Caco-2 (cell line): ENCODE measurements at regions of chr3 and their contacts with region 1.

Region 1: DNA sequence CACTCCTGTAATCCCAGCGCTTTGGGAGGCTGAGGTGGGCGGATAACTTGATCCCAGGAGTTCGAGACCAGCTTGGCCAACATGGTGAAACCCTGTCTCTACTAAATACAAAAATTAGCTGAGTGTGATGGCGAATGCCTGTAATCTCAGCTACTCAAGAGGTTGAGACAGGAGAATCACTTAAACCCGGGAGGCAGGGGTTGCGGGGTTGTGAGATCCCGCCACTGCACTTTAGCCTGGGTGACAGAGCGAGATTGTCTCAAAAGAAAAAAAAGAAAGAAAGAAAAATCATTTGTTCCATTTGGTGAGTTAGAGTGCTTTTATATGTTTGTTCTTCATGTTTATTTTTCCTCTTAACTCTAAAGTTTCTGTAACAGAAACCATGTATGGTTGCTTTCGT is 7.3 kb downstream of the NCK1 start:
- DNase-seq: no peak
- H3K4me3 ChIP-seq: no peak overlapping the region
- H3K4me3 Mint-ChIP-seq: no peak overlapping the region
- H3K27ac Mint-ChIP-seq: no peak overlapping the region
- H3K4me1 ChIP-seq: peaks cover 9% of the 10 kb centered on the region; the same call in 1 of the 2 replicates
- H3K4me1 Mint-ChIP-seq: peaks cover 35% of the 10 kb centered on the region
- H3K27me3 ChIP-seq: no peaks in the 10 kb centered on the region
- H3K27me3 Mint-ChIP-seq: no peaks in the 10 kb centered on the region
- CTCF ChIP-seq: no peak

Region 2: DNA sequence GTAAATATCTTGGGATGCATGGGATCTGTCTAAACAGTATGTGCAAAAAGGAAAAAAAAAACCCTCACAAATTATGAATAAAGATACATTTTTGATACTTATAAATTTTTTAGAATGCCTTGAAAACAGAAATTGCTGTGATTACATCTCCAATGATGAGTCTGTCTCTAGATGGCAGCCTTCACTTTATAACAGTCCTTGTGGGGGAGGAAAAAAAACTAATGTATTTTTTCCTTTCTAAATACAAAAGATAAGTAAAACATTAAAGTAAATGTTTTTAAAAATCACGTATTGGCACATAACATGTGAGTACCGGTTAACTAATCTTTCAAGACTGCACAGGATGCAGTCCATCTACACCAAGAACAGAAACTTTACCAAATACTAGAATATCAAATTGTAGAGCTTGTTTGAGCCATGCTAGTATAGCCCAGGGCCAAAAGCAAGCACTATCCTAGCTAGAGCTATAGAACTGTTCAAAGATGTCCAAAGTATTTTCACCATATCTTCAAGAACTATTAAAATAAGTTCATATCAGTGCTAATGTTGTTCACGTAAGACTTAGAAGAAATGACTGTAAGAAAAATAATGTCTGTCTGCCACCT is 323.5 kb before region 1 on chr3:
- CTCF ChIA-PET with region 1: no interaction called
- POLR2A ChIA-PET with region 1: no interaction called
- intact Hi-C with region 1: no loop called
- DNase-seq: no peak
- H3K4me3 ChIP-seq: no peak overlapping the region
- H3K4me3 Mint-ChIP-seq: no peak overlapping the region
- H3K27ac Mint-ChIP-seq: no peak overlapping the region
- H3K4me1 ChIP-seq: 0 out of 2 replicates have a peak, but pooled peaks cover 8% of the 10 kb centered on the region
- H3K4me1 Mint-ChIP-seq: peaks cover 10% of the 10 kb centered on the region
- H3K27me3 ChIP-seq: no peaks in the 10 kb centered on the region
- H3K27me3 Mint-ChIP-seq: no peaks in the 10 kb centered on the region
- CTCF ChIP-seq: peak; percentile 10 to 30

Region 3: DNA sequence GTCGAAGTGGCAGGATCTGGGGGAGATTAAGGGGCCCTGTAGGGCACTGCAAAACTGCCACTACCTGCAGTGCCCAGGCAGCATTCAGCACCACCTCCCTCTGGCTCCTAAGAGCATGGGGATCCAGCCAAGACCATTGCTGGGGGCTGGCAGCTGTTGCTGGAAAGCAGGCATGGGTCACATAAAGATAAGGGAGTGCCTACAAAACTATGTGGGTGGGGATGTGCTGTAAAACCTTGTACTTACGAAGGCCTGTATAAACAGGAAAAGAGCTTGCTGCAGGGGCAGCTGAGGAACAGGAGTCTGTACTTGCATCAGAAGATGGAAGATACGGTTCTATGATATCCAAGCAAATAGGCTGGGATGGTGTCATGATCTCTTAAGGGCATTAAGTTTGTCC is 115.6 kb after region 1 on chr3:
- CTCF ChIA-PET with region 1: no interaction called
- POLR2A ChIA-PET with region 1: interaction called, 11 read pairs
- intact Hi-C with region 1: no loop called
- DNase-seq: peak; percentile 44 to 60
- H3K4me3 ChIP-seq: no peak overlapping the region
- H3K4me3 Mint-ChIP-seq: no peak overlapping the region
- H3K27ac Mint-ChIP-seq: peak overlapping the region; percentile 14
- H3K4me1 ChIP-seq: peaks cover 14% of the 10 kb centered on the region
- H3K4me1 Mint-ChIP-seq: peaks cover 14% of the 10 kb centered on the region
- H3K27me3 ChIP-seq: no peaks in the 10 kb centered on the region
- H3K27me3 Mint-ChIP-seq: no peaks in the 10 kb centered on the region
- CTCF ChIP-seq: no peak